Activated CD4-positive, alpha-beta memory T cell treated with anti-CD3 and anti-CD28 coated beads for 36 hours (primary cell): ENCODE measurements at regions of chr11 and their contacts with region 1.

Region 1: DNA sequence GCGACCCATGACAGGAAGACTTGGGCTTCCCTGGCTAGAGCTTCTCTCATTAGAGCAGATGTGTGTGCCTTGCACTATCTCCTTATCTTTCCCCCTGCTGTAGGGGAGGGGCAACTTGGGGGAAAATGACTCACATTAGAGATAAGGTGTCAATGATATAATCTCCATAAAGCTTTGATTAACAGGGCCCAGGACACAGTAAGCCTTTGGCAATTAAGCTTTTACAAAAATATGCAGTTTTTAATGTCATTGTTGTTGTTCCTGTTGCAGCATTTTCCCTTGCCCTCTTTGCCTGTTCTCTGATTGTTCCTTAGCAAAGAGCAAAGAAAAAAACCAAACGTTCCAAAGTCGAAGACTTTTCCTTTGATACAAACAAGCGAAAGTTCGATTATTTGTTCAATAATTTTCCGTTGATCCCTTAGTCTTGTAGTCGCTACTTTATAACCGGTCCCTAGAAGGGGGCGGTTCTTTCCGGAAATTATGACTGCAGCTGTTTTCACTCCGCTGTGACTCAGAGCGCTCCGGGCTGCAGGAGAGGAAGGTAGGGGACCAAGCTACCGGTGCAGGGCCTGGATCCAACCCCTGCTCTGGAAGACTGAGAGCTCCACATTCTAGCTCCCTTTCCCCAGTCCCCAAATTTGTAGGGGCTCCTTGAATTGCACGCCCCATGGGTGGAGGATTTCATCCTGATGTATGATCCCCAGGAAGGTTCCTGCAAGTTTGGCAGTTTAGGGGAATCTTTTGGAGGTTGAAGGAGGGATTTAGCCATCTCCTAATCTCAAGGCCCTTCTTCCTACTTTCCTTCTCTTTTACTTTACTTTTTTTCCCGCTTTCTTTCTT is at the start of gene VWA5A:
- DNase-seq: peak; percentile 89
- H3K4me3 Mint-ChIP-seq: peak within 1 kb of the TSS; percentile 85
- H3K27ac Mint-ChIP-seq: peak within 1 kb of the TSS; percentile 76
- H3K4me1 Mint-ChIP-seq: peaks cover 15% of the 10 kb centered on the region
- H3K27me3 Mint-ChIP-seq: peaks cover 2% of the 10 kb centered on the region
- total RNA-seq, gene VWA5A: 6.9 to 7.5 TPM

Region 2: DNA sequence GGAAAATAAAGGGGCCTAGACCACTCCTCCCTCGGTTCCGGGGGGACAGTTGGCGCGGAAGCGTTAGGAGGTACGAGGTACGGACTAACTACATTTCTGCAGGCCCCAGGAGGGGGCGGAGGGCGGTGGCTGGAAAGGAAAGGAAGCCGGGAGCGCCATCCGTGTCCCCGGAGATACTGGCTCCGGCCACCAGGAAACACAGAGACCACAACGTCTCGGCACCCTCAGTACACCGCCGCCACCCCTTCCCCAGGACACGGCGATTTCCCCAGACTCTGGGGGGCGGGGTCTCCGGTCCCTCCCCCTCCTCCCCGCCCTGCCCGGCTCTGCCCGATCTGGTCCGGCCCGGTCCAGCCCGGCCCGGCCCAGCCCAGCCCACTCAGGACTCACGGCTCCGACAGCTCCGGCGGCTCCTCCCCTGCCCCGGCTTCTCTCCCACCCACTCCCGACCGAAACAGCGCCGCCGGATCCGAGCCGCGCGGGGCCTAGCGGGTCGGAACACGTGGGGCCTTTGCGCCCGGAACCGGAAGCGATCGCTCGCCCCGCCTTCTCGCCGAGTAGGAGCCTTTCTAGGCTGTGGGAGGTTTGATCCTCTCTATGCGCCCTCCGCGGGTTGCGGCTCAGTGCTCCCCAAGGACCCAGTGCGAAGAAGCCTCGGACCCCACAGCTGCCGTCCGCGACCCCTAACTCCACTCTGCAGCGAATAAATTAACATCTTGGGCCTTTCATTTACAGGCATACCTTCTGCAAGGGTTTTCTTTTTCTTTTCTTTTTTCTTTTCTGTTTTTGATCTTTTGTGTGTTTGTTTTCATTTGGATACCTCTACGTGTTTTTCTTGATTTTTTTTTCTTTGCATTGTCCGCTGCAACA is 373.8 kb before region 1 on chr11 and contains the start of gene ZNF202:
- CTCF ChIA-PET with region 1: no interaction called
- POLR2A ChIA-PET with region 1: no interaction called
- intact Hi-C with region 1: loop called (anchors 5 kb)
- DNase-seq: peak; percentile 95
- H3K4me3 Mint-ChIP-seq: peak within 1 kb of the TSS; percentile 97
- H3K27ac Mint-ChIP-seq: peak within 1 kb of the TSS; percentile 83
- H3K4me1 Mint-ChIP-seq: peaks cover 34% of the 10 kb centered on the region
- H3K27me3 Mint-ChIP-seq: no peaks in the 10 kb centered on the region
- total RNA-seq, gene ZNF202: 7.8 to 7.9 TPM